ENCODE measurements at regions of chr7 and their contacts with region 1.

Region 1: DNA sequence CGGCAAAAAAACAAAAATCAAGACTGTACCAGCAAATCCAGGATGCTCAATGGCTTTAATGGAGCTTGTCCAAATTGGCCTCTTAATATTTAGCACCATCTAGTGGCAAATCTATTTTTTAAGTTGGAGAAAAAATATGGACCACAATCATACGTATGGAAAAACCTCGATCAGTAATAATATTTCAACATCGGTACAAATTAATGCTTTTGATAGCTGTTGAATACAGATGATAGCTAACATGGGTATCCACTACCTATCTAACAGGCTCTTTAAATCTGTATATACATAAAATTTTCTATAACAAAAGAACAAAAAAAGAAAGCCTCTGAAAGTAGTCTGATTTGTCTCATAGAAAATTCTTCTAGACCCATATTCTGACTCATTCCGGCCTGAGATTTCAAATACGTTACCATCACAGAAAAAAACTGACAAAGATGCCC is 29.2 kb downstream of the COA1 start:
- DNase-seq: no peak
- ATAC-seq: peak in 7 of 8 donors; percentile 49 to 83 (median 60)
- H3K4me3 ChIP-seq: no peak overlapping the region
- H3K27ac ChIP-seq: no peak overlapping the region
- H3K4me1 ChIP-seq: peaks cover 0 to 30% (median 7%) of the 10 kb centered on the region in 9 donors
- H3K27me3 ChIP-seq: no peaks in the 10 kb centered on the region
- CTCF ChIP-seq: peak; percentile 50 to 87 (median 76)

Region 2: GRCh38 chr7:43639858-43640491 is 60.1 kb before region 1 on chr7:
- intact Hi-C with region 1: loop called in 2 of 10 experiments (anchors 5 kb)
- DNase-seq: peak; percentile 41 to 60
- ATAC-seq: peak; percentile 78 to 93 (median 89)
- H3K4me3 ChIP-seq: peak overlapping the region in 1 of 10 donors; percentile 0
- H3K27ac ChIP-seq: peak overlapping the region in 9 of 10 donors; percentile 42 to 81 (median 66)
- H3K4me1 ChIP-seq: peaks cover 11 to 59% (median 21%) of the 10 kb centered on the region in 9 donors
- H3K27me3 ChIP-seq: no peaks in the 10 kb centered on the region
- CTCF ChIP-seq: no peak

Region 3: GRCh38 chr7:43647673-43648472 is 52.2 kb before region 1 on chr7:
- intact Hi-C with region 1: loop called in 1 of 10 experiments (anchors 5 kb)
- DNase-seq: peak; percentile 43 to 45
- ATAC-seq: peak; percentile 56 to 82 (median 66)
- H3K4me3 ChIP-seq: peak overlapping the region in 2 of 10 donors; percentile 17 to 21
- H3K27ac ChIP-seq: peak overlapping the region; percentile 72 to 96 (median 90)
- H3K4me1 ChIP-seq: peaks cover 36 to 85% (median 70%) of the 10 kb centered on the region in 9 donors
- H3K27me3 ChIP-seq: no peaks in the 10 kb centered on the region
- CTCF ChIP-seq: no peak